ENCODE measurements at regions of chr4 and their contacts with region 1.

Region 1: GRCh38 chr4:77156533-77156911 is 485 bp upstream of the CCNG2 start:
- DNase-seq: peak; percentile 84 to 99
- ATAC-seq: peak; percentile 94 to 98 (median 97)
- H3K4me3 ChIP-seq: peak overlapping the region; percentile 75 to 99 (median 93)
- H3K27ac ChIP-seq: peak overlapping the region; percentile 80 to 98 (median 90)
- H3K4me1 ChIP-seq: peaks cover 0 to 33% (median 13%) of the 10 kb centered on the region in 9 donors
- H3K27me3 ChIP-seq: no peaks in the 10 kb centered on the region
- CTCF ChIP-seq: no peak

Region 2: GRCh38 chr4:77015390-77015789 is 141.1 kb before region 1 on chr4:
- intact Hi-C with region 1: no loop called
- DNase-seq: no peak
- ATAC-seq: no peak
- H3K4me3 ChIP-seq: no peak overlapping the region
- H3K27ac ChIP-seq: no peak overlapping the region
- H3K4me1 ChIP-seq: peaks cover 0 to 42% (median 23%) of the 10 kb centered on the region in 9 donors
- H3K27me3 ChIP-seq: no peaks in the 10 kb centered on the region
- CTCF ChIP-seq: no peak

Region 3: GRCh38 chr4:77075869-77076799 is 80.4 kb before region 1 on chr4 and contains the start of gene CCNI:
- intact Hi-C with region 1: loop called in 6 of 10 experiments (anchors 1 to 5 kb)
- DNase-seq: peak; percentile 96
- ATAC-seq: peak; percentile 94 to 98 (median 95)
- H3K4me3 ChIP-seq: peak within 1 kb of the TSS; percentile 66 to 92 (median 80)
- H3K27ac ChIP-seq: peak within 1 kb of the TSS; percentile 91 to 100 (median 99)
- H3K4me1 ChIP-seq: peaks cover 0 to 62% (median 35%) of the 10 kb centered on the region in 9 donors
- H3K27me3 ChIP-seq: no peaks in the 10 kb centered on the region
- CTCF ChIP-seq: no peak
- total RNA-seq, gene CCNI: 223 to 354 (median 306) TPM

Region 4: DNA sequence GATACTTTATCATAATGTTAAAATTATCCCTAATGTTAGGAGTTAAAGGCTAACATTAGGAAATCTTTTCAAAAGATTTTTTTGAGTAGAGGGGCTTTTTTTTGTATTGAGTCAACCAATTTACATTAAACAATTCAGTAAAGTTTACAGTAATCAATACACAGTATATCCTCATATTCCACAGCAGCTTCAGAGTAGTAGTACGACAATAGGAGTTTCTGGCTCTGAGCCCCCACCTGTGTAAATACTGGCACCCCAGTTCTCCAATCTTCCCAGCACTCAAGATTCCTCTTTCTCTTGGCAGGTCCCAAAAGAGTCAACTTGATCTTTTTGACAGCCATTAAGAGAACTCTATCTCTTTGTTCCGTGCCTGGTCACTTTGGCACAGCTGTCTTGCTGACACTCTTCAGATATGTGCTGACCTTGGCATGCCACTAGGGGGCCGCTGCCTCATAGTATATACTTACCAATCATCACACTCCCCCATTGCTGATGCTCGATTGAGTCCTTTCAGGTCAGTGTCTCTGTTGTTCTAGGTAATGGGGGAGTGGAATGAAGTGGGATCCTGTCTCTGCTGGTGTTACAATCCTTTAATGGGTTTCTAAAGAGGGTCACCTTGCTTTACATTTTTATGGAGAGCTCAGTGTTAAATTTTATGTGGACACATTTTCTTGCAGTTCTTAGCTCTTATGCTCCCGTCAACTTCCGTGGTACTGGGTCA is 61.3 kb before region 1 on chr4:
- intact Hi-C with region 1: loop called in 5 of 10 experiments (anchors 5 to 10 kb)
- DNase-seq: peak; percentile 70 to 82
- ATAC-seq: peak; percentile 92 to 98 (median 96)
- H3K4me3 ChIP-seq: no peak overlapping the region
- H3K27ac ChIP-seq: no peak overlapping the region
- H3K4me1 ChIP-seq: peaks cover 0 to 28% (median 10%) of the 10 kb centered on the region in 9 donors
- H3K27me3 ChIP-seq: no peaks in the 10 kb centered on the region
- CTCF ChIP-seq: peak; percentile 71 to 93 (median 86)

Measured in heart right ventricle (tissue), 16 donors.